ENCODE measurements at regions of chr20 and their contacts with region 1.

Region 1: GRCh38 chr20:38842558-38842981 is 37.1 kb downstream of the PPP1R16B start:
- DNase-seq: peak; percentile 73
- H3K4me3 Mint-ChIP-seq: peak overlapping the region; percentile 78
- H3K27ac Mint-ChIP-seq: peak overlapping the region; percentile 98
- H3K4me1 Mint-ChIP-seq: peaks cover 65% of the 10 kb centered on the region
- H3K27me3 Mint-ChIP-seq: no peaks in the 10 kb centered on the region

Region 2: DNA sequence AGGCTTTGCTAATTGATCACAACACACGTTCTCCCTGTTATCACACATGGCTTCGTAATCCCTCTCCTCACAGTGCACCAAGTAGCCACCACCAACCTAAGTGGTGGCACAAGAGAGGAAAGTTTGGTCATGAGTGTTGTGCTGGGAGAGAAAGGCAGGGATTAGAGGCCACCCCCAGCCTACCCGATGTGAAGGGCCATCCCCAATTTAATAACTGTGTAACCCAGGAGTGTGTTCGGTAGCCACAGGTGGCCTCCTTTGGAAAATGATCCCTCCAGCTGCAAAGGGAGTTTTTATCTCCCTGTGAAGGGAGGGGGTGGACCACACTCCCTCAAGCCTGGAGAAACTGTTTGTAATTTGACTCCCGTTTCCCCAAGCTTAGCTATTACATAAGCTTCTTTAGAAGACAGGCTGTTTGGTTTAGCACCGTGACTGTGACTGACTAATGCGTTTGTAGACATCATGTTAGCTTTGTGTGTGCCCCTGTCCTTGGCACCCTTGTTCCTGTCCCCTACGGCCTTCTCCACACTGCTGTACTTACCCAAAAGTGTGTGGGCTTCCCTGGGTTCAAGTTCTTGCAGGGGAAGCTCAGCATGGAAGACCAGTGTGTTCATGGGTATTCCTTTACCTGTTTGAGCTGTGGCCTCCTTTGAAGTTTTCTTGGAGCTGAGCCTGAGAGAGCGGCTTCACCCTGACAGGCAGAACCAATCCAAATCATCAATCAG is 16.5 kb before region 1 on chr20:
- intact Hi-C with region 1: loop called (anchors 2 kb)
- DNase-seq: no peak
- H3K4me3 Mint-ChIP-seq: no peak overlapping the region
- H3K27ac Mint-ChIP-seq: peak overlapping the region; percentile 58
- H3K4me1 Mint-ChIP-seq: peaks cover 77% of the 10 kb centered on the region
- H3K27me3 Mint-ChIP-seq: no peaks in the 10 kb centered on the region

Region 3: GRCh38 chr20:38863024-38863851 is 20.7 kb after region 1 on chr20:
- intact Hi-C with region 1: loop called (anchors 1 kb)
- DNase-seq: peak; percentile 81
- H3K4me3 Mint-ChIP-seq: peak overlapping the region; percentile 49
- H3K27ac Mint-ChIP-seq: peak overlapping the region; percentile 87
- H3K4me1 Mint-ChIP-seq: peaks cover 62% of the 10 kb centered on the region
- H3K27me3 Mint-ChIP-seq: no peaks in the 10 kb centered on the region